ENCODE measurements at regions of chr4 and their contacts with region 1.

Region 1: GRCh38 chr4:112523764-112524505 is 8.0 kb upstream of the NEUROG2 start:
- DNase-seq: peak; percentile 94
- H3K4me3 Mint-ChIP-seq: peak overlapping the region; percentile 88
- H3K27ac Mint-ChIP-seq: peak overlapping the region; percentile 38
- H3K4me1 Mint-ChIP-seq: peaks cover 30% of the 10 kb centered on the region
- H3K27me3 Mint-ChIP-seq: peaks cover 70% of the 10 kb centered on the region

Region 2: DNA sequence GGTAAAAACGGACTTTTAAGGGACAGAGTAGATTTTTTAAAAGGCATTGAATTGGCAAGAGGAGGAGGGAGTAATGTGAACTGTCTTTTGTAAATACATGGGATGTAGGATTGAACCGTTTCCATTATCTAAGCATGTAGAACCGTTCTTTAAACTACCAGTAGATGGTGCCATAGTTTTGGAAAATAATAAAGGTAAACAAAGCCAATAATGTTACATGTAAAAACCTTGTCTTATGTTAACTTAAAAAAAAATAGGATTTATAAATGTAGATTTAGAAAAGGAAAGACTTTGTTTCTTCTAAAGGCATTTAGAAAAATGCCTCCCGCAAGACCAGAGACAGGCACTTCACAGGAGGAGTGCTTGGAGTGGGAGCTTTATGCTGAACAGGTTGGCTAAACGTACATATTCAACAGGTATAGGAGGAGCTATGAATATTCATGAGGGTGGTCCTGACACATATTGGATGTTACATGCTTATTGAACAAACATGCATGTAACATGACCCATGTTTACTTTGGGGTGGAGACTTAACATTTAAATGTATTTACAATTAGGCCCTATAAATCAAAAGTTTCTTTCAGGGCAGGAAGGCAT is 424.1 kb before region 1 on chr4:
- intact Hi-C with region 1: loop called (anchors 1 kb)
- DNase-seq: no peak
- H3K4me3 Mint-ChIP-seq: no peak overlapping the region
- H3K27ac Mint-ChIP-seq: no peak overlapping the region
- H3K4me1 Mint-ChIP-seq: peaks cover 5% of the 10 kb centered on the region
- H3K27me3 Mint-ChIP-seq: peaks cover 27% of the 10 kb centered on the region

Region 3: DNA sequence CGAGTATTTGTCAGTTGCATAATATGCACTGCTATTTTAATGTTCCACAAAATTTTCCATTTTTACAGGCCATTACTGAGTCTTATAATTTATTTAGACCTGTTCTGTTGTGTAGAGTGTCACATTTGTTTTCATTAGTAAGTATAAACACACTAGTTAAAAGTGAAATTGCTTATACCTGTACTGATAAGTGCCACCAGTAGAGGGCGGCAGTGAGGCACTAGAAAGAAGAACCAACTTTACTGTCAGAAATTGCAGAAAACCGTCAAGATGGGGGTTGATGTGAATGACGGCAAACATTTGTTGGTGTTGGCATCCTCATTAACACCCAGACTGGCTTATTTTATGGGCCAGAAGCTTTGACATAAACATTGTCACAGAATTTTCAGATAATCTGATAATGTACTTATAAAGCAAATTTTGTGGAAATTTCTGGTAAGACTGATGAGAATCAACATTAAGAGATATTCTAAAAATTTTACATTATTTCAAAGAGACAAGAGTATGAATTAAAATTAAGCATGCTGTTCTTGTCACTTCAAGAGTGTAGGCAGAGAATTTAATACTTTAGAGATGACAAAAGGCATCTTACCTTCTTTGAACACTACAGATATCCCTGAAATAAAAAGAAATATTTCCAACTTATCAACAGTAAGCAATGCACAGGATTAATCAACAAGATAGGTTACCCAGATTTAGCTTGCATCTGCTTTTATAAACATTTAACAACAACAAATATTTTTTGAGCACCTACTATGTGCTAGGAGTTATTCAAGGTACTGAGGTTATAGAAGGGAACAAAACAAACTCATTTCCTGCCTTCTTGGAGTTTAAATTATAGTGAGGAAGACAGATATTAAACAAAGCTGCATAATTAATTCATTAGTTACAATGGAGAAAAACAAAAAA is 201.9 kb before region 1 on chr4:
- intact Hi-C with region 1: loop called (anchors 2 kb)
- DNase-seq: peak; percentile 93
- H3K4me3 Mint-ChIP-seq: no peak overlapping the region
- H3K27ac Mint-ChIP-seq: no peak overlapping the region
- H3K4me1 Mint-ChIP-seq: peaks cover 29% of the 10 kb centered on the region
- H3K27me3 Mint-ChIP-seq: no peaks in the 10 kb centered on the region

Region 4: DNA sequence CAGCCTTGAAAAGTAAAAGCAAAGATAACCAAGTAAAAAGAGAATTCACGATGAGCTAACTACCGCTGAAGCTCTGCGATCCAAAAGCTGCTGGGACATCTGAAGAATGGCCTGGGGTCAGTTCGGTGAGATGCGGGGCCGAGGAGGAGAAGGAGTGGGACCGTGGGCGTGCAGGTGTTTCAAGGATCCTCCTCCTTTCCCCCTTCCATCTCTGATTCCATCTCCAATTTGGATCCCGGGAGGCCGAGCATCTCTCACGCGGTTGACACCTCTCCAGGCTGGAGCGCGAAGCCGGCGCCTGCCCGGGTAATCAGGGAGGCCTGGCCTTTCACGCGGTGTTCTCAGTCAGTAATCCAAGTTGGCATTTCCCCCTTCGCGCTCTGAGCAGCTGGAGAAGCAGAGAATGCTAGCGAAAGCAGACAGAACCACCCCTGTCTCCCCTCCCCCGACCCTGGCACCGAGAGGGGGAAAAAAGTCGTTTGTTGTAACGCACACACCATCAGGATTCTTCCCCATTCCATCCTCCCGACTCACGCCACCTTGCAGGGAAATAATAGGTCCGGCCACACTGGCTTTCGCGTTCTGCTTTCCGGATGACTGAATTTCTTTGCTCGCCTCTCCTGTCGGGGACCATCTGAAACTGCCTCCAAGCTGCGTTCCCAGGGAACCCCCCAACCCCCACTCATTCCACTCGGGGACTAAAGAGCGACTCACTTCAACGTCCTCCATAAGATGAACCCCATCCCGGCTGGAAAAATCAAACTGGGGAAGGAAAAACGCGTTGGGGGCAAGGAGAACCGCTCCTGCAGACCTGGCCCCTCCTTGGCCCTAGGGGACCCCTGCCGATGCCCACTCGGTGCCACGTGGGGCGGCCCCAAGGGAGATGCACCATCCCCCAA is 14.4 kb before region 1 on chr4:
- intact Hi-C with region 1: loop called (anchors 1 kb)
- DNase-seq: peak; percentile 68
- H3K4me3 Mint-ChIP-seq: peak overlapping the region; percentile 56
- H3K27ac Mint-ChIP-seq: no peak overlapping the region
- H3K4me1 Mint-ChIP-seq: peaks cover 30% of the 10 kb centered on the region
- H3K27me3 Mint-ChIP-seq: peaks cover 80% of the 10 kb centered on the region

Region 5: GRCh38 chr4:112552668-112553067 is 28.7 kb after region 1 on chr4:
- intact Hi-C with region 1: no loop called
- DNase-seq: no peak
- H3K4me3 Mint-ChIP-seq: no peak overlapping the region
- H3K27ac Mint-ChIP-seq: no peak overlapping the region
- H3K4me1 Mint-ChIP-seq: no peaks in the 10 kb centered on the region
- H3K27me3 Mint-ChIP-seq: no peaks in the 10 kb centered on the region

Region 6: GRCh38 chr4:112765317-112765975 is 241.5 kb after region 1 on chr4:
- intact Hi-C with region 1: loop called (anchors 5 kb)
- DNase-seq: no peak
- H3K4me3 Mint-ChIP-seq: no peak overlapping the region
- H3K27ac Mint-ChIP-seq: no peak overlapping the region
- H3K4me1 Mint-ChIP-seq: peaks cover 2% of the 10 kb centered on the region
- H3K27me3 Mint-ChIP-seq: no peaks in the 10 kb centered on the region